Activated T-helper 1 cell treated with anti-CD3 and anti-CD28 coated beads, Interleukin-12 subunit alpha, Interleukin-12 subunit beta, Interleukin-2, Interleukin-4 antibody, amounts not matched to agents 30 ng/mL and 10 ng/mL and 1 ng/mL, durations not matched to agents 14 hours and 24 hours and 36 hours (primary cell): ENCODE measurements at regions of chr12 and their contacts with region 1.

Region 1: GRCh38 chr12:110124184-110124995 is at the start of gene IFT81:
- DNase-seq: peak; percentile 93
- H3K4me3 Mint-ChIP-seq: peak within 1 kb of the TSS; percentile 88
- H3K27ac Mint-ChIP-seq: peak within 1 kb of the TSS; percentile 83
- H3K4me1 Mint-ChIP-seq: no peaks in the 10 kb centered on the region
- H3K27me3 Mint-ChIP-seq: peaks cover 29% of the 10 kb centered on the region
- total RNA-seq, gene IFT81: 0.91 and 1.2 TPM in 2 replicates

Region 2: GRCh38 chr12:110048242-110049027 is 76.0 kb before region 1 on chr12 and contains the start of gene C12orf76:
- intact Hi-C with region 1: loop called (anchors 1 kb)
- DNase-seq: peak; percentile 89
- H3K4me3 Mint-ChIP-seq: peak within 1 kb of the TSS; percentile 84
- H3K27ac Mint-ChIP-seq: peak within 1 kb of the TSS; percentile 91
- H3K4me1 Mint-ChIP-seq: peaks cover 34% of the 10 kb centered on the region
- H3K27me3 Mint-ChIP-seq: no peaks in the 10 kb centered on the region
- total RNA-seq, gene C12orf76: 20.3 and 20.8 TPM in 2 replicates

Region 3: GRCh38 chr12:110100315-110100970 is 23.9 kb before region 1 on chr12:
- intact Hi-C with region 1: loop called (anchors 2 kb)
- DNase-seq: peak; percentile 39
- H3K4me3 Mint-ChIP-seq: no peak overlapping the region
- H3K27ac Mint-ChIP-seq: no peak overlapping the region
- H3K4me1 Mint-ChIP-seq: peaks cover 9% of the 10 kb centered on the region
- H3K27me3 Mint-ChIP-seq: no peaks in the 10 kb centered on the region

Region 4: GRCh38 chr12:110501752-110502738 is 377.7 kb after region 1 on chr12 and contains the starts of genes RAD9B and VPS29:
- intact Hi-C with region 1: loop called (anchors 5 kb)
- DNase-seq: peak; percentile 99
- H3K4me3 Mint-ChIP-seq: peak within 1 kb of the TSS; percentile 90
- H3K27ac Mint-ChIP-seq: peak within 1 kb of the TSS; percentile 90
- H3K4me1 Mint-ChIP-seq: peaks cover 29% of the 10 kb centered on the region
- H3K27me3 Mint-ChIP-seq: no peaks in the 10 kb centered on the region
- total RNA-seq, gene RAD9B: 0.88 and 1.4 TPM in 2 replicates
- total RNA-seq, gene VPS29: 109 and 111 TPM in 2 replicates